GM18951 (cell line): ENCODE measurements at regions of chr1 and their contacts with region 1.

Region 1: GRCh38 chr1:59947047-59947938 is 20.7 kb upstream of the CYP2J2 start:
- POLR2A ChIP-seq: no peak

Region 2: GRCh38 chr1:59892841-59893811 is 54.2 kb before region 1 on chr1:
- in situ Hi-C with region 1: loop called (anchors 10 kb)
- POLR2A ChIP-seq: no peak